Prostate gland (tissue), 2 donors: ENCODE measurements at regions of chr2 and their contacts with region 1.

Region 1: GRCh38 chr2:33673937-33674336 is 74.8 kb upstream of the FAM98A start:
- DNase-seq: no peak
- H3K4me3 ChIP-seq: no peak overlapping the region
- H3K27ac ChIP-seq: no peak overlapping the region
- H3K4me1 ChIP-seq: no peaks in the 10 kb centered on the region
- H3K27me3 ChIP-seq: no peaks in the 10 kb centered on the region
- CTCF ChIP-seq: peak in 3 of 4 experiments; percentile 18 to 40 (median 36)
- POLR2A ChIP-seq: no peak

Region 2: DNA sequence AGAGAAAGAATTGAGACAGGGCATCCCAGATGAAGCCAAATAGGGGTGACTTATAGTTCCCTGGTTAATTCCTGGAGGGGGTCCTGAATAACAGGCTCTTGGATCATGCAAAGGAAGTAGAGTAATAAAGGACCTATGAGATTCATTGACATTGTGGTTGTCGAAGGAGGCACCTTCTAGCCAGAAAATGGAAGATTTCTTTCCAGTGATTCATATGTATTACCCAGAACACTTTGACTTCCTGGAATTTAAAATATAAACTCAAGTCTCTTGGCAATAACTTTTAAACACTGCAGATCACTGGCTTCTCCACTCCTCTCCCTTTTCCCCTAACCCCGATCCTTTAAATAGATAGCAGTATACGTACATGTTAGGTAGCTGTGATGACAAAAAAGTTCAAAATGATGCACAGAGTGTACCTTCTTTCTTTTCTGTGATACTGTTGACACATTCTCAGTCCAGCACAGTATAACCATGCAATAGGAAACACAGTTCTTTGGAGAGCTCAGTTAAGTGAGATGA is 515.4 kb before region 1 on chr2:
- intact Hi-C with region 1: no loop called
- DNase-seq: no peak
- H3K4me3 ChIP-seq: no peak overlapping the region
- H3K27ac ChIP-seq: peak overlapping the region in 1 of 2 donors; percentile 36
- H3K4me1 ChIP-seq: no peaks in the 10 kb centered on the region
- H3K27me3 ChIP-seq: no peaks in the 10 kb centered on the region
- CTCF ChIP-seq: no peak
- POLR2A ChIP-seq: no peak

Region 3: GRCh38 chr2:33240178-33240577 is 433.8 kb before region 1 on chr2:
- intact Hi-C with region 1: no loop called
- DNase-seq: no peak
- H3K4me3 ChIP-seq: no peak overlapping the region
- H3K27ac ChIP-seq: no peak overlapping the region
- H3K4me1 ChIP-seq: no peaks in the 10 kb centered on the region
- H3K27me3 ChIP-seq: no peaks in the 10 kb centered on the region
- CTCF ChIP-seq: no peak
- POLR2A ChIP-seq: no peak

Region 4: GRCh38 chr2:33550206-33550605 is 123.7 kb before region 1 on chr2:
- intact Hi-C with region 1: no loop called
- DNase-seq: no peak
- H3K4me3 ChIP-seq: no peak overlapping the region
- H3K27ac ChIP-seq: no peak overlapping the region
- H3K4me1 ChIP-seq: no peaks in the 10 kb centered on the region
- H3K27me3 ChIP-seq: no peaks in the 10 kb centered on the region
- CTCF ChIP-seq: no peak
- POLR2A ChIP-seq: no peak

Region 5: DNA sequence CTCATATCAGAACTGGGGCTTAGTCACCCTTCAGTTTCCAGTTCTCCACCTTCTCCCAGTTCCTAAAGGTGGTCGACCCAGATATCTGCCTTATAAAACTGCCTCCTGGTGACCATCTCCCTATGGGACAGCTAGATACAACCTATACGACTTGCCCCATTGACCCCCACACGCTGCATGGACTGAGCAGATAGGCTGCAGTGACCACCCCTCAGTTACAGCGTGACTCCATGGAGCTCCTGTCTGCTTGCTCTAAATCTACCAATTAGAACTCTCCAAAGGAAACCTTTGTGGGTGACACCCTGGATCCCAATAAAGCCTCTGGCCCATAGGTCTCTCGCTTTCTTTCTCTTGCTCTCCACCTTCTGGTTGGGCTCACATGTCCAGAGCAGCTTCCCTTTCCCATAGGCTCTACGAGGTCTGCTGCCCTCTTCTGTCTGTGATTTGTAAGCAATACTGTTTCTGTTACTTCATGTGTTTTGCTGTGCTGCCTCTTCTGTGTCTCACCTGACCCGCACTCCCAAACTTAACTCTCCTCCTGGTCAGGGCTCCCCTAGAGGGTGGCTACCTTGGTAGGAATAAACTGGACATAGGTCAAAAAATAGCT is 896.4 kb after region 1 on chr2:
- intact Hi-C with region 1: loop called (anchors 10 kb)
- DNase-seq: peak; percentile 15
- H3K4me3 ChIP-seq: no peak overlapping the region
- H3K27ac ChIP-seq: no peak overlapping the region
- H3K4me1 ChIP-seq: no peaks in the 10 kb centered on the region
- H3K27me3 ChIP-seq: no peaks in the 10 kb centered on the region
- CTCF ChIP-seq: peak in 2 of 4 experiments; percentile 32 to 43
- POLR2A ChIP-seq: no peak

Region 6: DNA sequence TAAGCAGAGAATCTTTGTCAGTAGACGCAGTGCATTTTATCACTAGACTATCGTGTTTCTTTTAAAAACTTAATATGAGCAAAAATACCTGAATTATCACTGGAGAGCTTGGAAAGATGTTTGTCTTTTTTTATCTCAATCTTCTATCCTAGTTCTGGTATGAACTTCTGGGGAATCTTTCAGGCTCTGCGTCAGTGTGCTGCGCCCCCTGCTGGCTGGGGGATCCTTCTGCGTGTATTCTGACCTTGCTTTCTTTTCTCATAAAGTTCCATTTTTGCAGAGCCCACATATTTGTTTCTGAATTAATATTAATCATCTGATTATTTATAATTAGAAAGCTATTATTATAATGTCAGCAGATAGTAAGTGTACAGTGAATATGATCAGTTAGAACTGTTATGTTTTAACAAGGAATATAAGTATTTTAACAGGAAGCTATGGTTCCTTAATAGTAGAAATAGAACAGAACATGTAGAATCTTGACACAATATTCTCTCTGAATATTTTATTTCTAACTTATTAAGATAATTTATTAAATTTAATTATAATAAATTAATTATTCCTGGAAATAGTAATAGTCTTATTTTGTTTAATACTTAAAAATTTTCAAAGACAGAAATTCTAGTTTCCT is 1736.6 kb after region 1 on chr2:
- intact Hi-C with region 1: loop called (anchors 10 kb)
- DNase-seq: peak; percentile 10
- H3K4me3 ChIP-seq: no peak overlapping the region
- H3K27ac ChIP-seq: no peak overlapping the region
- H3K4me1 ChIP-seq: no peaks in the 10 kb centered on the region
- H3K27me3 ChIP-seq: no peaks in the 10 kb centered on the region
- CTCF ChIP-seq: peak; percentile 56 to 75 (median 66)
- POLR2A ChIP-seq: no peak